ENCODE measurements at regions of chr1 and their contacts with region 1.

Region 1: GRCh38 chr1:111127923-111128643 is 11.8 kb downstream of the DRAM2 start:
- H3K4me3 Mint-ChIP-seq: peak overlapping the region; percentile 44
- H3K27ac Mint-ChIP-seq: peak overlapping the region; percentile 82
- H3K4me1 Mint-ChIP-seq: peaks cover 55% of the 10 kb centered on the region
- H3K27me3 Mint-ChIP-seq: no peaks in the 10 kb centered on the region

Region 2: DNA sequence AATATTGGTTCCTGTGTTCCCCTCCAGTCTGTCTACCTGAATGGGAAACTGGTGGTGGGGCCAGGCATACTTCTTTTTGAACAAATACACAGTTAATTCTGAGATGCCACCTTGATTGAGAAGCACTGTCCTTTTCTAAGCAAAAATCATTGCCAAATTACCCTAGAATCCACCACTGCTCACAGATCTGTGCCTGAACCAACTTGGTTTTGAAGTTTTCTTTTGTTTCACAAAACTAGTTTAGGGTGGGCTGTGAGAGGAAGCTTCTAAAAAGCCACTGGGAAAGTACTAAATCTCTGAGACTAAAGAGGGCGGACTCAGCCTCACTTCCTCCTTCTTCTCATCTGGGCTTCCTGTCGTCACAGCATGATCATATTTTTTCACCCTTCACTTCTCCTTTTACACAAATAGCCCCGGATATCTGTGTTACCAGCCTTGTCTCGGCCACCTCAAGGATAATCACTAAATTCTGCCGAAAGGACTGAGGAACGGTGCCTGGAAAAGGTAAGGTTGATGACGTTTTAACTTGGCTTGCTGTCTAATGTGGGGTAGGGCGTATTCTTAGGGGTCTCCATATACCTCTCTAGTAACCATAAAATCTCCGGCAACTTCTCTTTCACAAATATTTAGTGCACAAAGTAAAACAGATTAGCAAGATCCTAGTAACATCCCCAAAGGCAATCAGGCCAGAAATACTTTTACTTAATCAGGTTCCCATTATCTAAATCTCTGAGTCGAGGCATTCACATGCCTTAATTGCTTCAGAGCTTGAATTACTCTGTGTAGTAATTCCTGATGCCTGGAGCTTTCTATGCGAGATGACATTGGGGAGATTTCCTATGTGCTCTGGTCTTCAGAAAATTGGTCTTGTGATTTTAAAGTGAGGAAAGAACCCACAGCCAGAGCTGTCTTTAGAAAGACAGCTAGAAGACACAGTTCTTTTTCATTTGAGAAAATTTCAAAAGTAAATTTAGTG is 255.1 kb before region 1 on chr1 and contains the start of gene CD53:
- intact Hi-C with region 1: loop called (anchors 10 kb)
- H3K4me3 Mint-ChIP-seq: peak within 1 kb of the TSS; percentile 94
- H3K27ac Mint-ChIP-seq: peak within 1 kb of the TSS; percentile 94
- H3K4me1 Mint-ChIP-seq: peaks cover 52% of the 10 kb centered on the region
- H3K27me3 Mint-ChIP-seq: no peaks in the 10 kb centered on the region

Region 3: GRCh38 chr1:110963691-110964399 is 164.2 kb before region 1 on chr1 and contains the start of gene LRIF1:
- intact Hi-C with region 1: no loop called
- H3K4me3 Mint-ChIP-seq: peak within 1 kb of the TSS; percentile 85
- H3K27ac Mint-ChIP-seq: peak within 1 kb of the TSS; percentile 99
- H3K4me1 Mint-ChIP-seq: peaks cover 31% of the 10 kb centered on the region
- H3K27me3 Mint-ChIP-seq: peaks cover 23% of the 10 kb centered on the region

Region 4: GRCh38 chr1:111176678-111177077 is 48.6 kb after region 1 on chr1:
- intact Hi-C with region 1: loop called (anchors 10 kb)
- H3K4me3 Mint-ChIP-seq: no peak overlapping the region
- H3K27ac Mint-ChIP-seq: no peak overlapping the region
- H3K4me1 Mint-ChIP-seq: no peaks in the 10 kb centered on the region
- H3K27me3 Mint-ChIP-seq: no peaks in the 10 kb centered on the region

Region 5: GRCh38 chr1:111203681-111204200 is 75.7 kb after region 1 on chr1:
- intact Hi-C with region 1: loop called (anchors 5 kb)
- H3K4me3 Mint-ChIP-seq: peak overlapping the region; percentile 76
- H3K27ac Mint-ChIP-seq: peak overlapping the region; percentile 83
- H3K4me1 Mint-ChIP-seq: peaks cover 87% of the 10 kb centered on the region
- H3K27me3 Mint-ChIP-seq: no peaks in the 10 kb centered on the region

Measured in dendritic cell treated with granulocyte-macrophage colony-stimulating factor and Interleukin-4, amounts not matched to agents 40 ng/mL and 50 ng/mL, for 4 days (primary cell).